ENCODE measurements at regions of chr19 and their contacts with region 1.

Region 1: DNA sequence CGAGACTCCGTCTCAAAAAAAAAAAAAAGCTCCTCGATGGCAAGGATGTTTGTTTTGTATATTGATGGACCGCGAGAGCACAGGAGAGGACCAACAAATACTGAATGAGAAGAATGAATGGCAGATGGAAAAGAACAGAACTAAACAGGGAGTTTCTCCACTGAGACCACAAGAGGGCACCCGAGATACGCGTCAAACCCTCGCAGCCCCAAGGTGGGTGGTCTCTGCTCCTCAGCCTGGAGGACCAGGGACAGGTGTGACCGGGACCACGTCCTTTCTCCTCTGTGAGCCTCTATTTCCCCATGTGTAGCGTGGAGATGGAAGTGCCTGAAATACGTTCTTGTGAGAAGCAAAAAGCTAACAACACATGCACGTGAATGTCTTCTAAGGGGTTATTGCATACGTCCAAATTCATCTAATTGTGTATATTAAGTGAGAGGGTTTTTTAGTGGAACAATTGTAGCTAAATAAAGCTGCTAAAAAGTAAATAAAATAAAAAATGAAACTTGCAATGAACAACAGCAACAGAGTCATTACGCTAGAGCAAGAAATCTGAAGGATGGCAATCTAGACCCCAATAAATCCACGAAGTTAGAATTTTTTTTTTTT is 8.3 kb upstream of the CDC42EP5 start:
- DNase-seq: peak; percentile 59
- H3K4me3 Mint-ChIP-seq: no peak overlapping the region
- H3K27ac Mint-ChIP-seq: no peak overlapping the region
- H3K4me1 Mint-ChIP-seq: no peaks in the 10 kb centered on the region
- H3K27me3 Mint-ChIP-seq: peaks cover 23% of the 10 kb centered on the region
- CTCF ChIP-seq: peak; percentile 55

Region 2: GRCh38 chr19:54469496-54469934 is 11.9 kb before region 1 on chr19:
- CTCF ChIA-PET with region 1: interaction called, 11 read pairs
- POLR2A ChIA-PET with region 1: no interaction called
- intact Hi-C with region 1: no loop called
- DNase-seq: no peak
- H3K4me3 Mint-ChIP-seq: no peak overlapping the region
- H3K27ac Mint-ChIP-seq: no peak overlapping the region
- H3K4me1 Mint-ChIP-seq: peaks cover 18% of the 10 kb centered on the region
- H3K27me3 Mint-ChIP-seq: peaks cover 21% of the 10 kb centered on the region
- CTCF ChIP-seq: no peak